Dendritic cell treated with granulocyte-macrophage colony-stimulating factor and Interleukin-4, amounts not matched to agents 40 ng/mL and 50 ng/mL, for 4 days (primary cell): ENCODE measurements at regions of chr14 and their contacts with region 1.

Region 1: GRCh38 chr14:33432407-33433023 is 493.8 kb downstream of the NPAS3 start:
- H3K4me3 Mint-ChIP-seq: no peak overlapping the region
- H3K27ac Mint-ChIP-seq: no peak overlapping the region
- H3K4me1 Mint-ChIP-seq: peaks cover 15% of the 10 kb centered on the region
- H3K27me3 Mint-ChIP-seq: peaks cover 3% of the 10 kb centered on the region

Region 2: GRCh38 chr14:32710731-32711680 is 721.5 kb before region 1 on chr14:
- intact Hi-C with region 1: loop called (anchors 10 kb)
- H3K4me3 Mint-ChIP-seq: no peak overlapping the region
- H3K27ac Mint-ChIP-seq: no peak overlapping the region
- H3K4me1 Mint-ChIP-seq: peaks cover 9% of the 10 kb centered on the region
- H3K27me3 Mint-ChIP-seq: peaks cover 5% of the 10 kb centered on the region